ENCODE measurements at regions of chr2 and their contacts with region 1.

Region 1: DNA sequence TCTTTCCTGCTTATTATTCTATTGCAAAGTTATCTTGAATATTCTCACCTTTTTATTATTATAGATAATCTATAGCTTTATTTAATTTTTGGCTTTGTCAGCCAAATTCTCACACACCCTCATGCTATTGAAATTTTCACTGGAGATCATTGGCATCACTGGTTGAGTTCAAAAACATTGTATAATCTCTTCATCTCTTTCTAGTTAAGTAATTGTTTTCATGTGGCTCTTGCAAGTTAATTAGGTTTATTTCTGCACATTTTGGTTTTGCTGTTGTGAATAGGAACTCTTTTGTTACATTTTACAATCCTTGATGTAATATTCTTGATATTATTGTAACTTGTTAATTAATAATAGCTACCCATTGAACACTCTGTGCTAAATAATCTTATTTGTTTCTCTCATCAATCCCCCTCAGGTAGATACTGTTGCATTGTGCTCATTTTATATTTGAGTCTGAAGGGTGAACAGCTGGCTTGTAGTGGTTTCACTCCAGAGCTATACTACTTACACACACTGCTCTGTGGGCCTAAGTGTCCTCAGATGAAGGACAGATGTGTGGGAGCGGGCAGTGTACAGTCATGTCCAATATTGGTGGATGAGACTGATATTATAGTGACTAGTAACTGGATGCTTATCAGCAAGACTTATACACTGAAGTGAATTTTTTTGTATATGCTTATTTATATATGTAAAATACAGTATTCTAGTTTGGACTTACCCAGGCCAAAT is 112.7 kb downstream of the LCLAT1 start:
- DNase-seq: no peak

Region 2: GRCh38 chr2:31287654-31288053 is 727.9 kb after region 1 on chr2:
- intact Hi-C with region 1: loop called in 1 of 2 experiments (anchors 10 kb)
- DNase-seq: no peak

Measured in posterior vena cava (tissue), 2 donors.